ENCODE measurements at regions of chr17 and their contacts with region 1.

Region 1: GRCh38 chr17:17823433-17824118 is 13.2 kb downstream of the SREBF1 start:
- DNase-seq: peak; percentile 99
- CTCF ChIP-seq: no peak

Region 2: GRCh38 chr17:17836250-17836817 is 12.8 kb after region 1 on chr17:
- CTCF ChIA-PET with region 1: interaction called, 7 read pairs
- POLR2A ChIA-PET with region 1: interaction called, 24 read pairs
- DNase-seq: peak; percentile 96
- CTCF ChIP-seq: no peak

Measured in GM10248 (cell line).